Activated CD4-positive, alpha-beta memory T cell treated with anti-CD3 and anti-CD28 coated beads for 36 hours (primary cell): ENCODE measurements at regions of chr12 and their contacts with region 1.

Region 1: DNA sequence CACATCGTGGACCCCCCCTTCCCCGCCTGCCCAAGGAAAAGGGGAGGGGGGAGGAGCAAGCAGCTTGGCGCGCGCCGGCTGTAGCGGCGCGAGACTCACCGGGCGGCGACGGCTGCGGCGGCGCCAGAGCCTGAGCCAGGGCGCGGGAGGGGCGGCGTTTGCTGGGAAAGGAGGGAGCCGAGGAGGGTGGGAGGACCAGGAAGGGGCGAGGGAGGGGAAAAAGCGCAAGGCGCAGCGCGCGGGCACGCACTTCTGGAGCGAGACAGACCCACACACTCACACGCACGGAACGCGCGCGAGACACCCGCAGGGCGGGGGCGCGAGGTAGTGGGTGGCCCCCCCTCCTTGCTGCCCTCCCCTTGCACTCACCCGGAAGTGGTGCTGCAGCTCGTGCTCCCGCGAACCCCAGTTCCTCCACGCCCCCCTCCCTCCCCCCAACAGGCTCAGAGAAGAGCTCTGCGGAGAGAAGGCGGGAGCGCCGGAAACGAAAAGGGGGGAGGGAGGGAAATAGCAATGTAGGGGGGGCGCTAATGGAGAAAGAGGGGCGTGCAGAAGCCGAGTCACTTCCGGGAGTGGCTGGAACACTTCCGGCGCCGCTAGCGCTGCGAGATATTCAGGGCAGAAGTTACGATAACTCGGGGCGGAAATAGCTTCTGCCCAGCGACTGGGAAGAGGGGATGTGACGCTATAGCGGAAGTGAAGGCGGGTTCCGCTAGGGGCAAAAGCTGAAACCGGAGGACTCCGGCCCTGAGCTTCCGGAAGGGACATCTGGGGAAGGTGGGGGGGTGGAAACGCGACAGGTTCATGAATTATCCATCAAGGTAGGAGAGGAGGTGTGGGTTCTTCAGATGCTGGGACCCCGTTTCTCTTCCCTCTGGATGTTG is at the start of gene ZNF384:
- DNase-seq: peak; percentile 97
- H3K4me3 Mint-ChIP-seq: peak within 1 kb of the TSS; percentile 92
- H3K27ac Mint-ChIP-seq: peak within 1 kb of the TSS; percentile 97
- H3K4me1 Mint-ChIP-seq: peaks cover 44% of the 10 kb centered on the region
- H3K27me3 Mint-ChIP-seq: no peaks in the 10 kb centered on the region
- total RNA-seq, gene ZNF384: 55.3 to 56.3 TPM

Region 2: DNA sequence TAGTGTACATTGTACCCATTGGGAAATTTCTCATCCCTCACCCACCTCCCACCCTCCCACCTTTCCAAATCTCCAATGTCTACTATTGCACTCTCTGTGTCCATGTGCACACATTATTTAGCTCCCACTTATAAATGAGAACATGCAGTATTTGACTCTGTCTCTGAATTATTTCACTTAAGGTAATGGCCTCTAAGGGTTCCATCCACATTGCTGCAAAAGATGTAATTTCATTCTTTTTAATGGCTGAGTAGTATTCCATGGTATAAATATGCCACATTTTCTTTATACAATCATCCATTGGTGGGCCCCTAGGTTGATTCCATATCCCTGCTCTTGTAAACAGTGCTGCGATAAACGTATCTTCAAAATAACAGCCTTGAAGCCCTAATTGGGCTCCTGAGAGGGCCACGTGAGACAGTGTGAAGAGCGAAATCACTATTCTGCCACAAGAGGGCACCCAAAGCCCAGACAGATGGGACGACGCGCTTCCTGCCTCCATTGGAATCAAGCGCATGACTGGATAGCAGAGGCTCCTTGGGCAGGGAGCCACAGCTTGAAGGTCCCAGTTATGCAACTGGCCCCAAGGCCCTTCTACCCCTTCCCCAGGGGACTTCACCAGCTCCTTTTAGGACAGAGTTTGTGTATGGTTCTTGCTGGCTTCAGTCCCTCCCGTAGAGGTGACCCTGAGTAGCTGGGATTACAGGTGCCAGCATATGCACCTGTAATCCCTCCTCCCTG is 265.8 kb before region 1 on chr12:
- CTCF ChIA-PET with region 1: no interaction called
- POLR2A ChIA-PET with region 1: no interaction called
- intact Hi-C with region 1: loop called (anchors 10 kb)
- DNase-seq: peak; percentile 86
- H3K4me3 Mint-ChIP-seq: no peak overlapping the region
- H3K27ac Mint-ChIP-seq: peak overlapping the region; percentile 69
- H3K4me1 Mint-ChIP-seq: peaks cover 43% of the 10 kb centered on the region
- H3K27me3 Mint-ChIP-seq: peaks cover 3% of the 10 kb centered on the region

Region 3: GRCh38 chr12:6570264-6570887 is 118.9 kb before region 1 on chr12:
- CTCF ChIA-PET with region 1: interaction called, 3 read pairs
- POLR2A ChIA-PET with region 1: interaction called, 4 read pairs
- intact Hi-C with region 1: loop called (anchors 1 kb)
- DNase-seq: peak; percentile 67
- H3K4me3 Mint-ChIP-seq: no peak overlapping the region
- H3K27ac Mint-ChIP-seq: peak overlapping the region; percentile 63
- H3K4me1 Mint-ChIP-seq: peaks cover 63% of the 10 kb centered on the region
- H3K27me3 Mint-ChIP-seq: no peaks in the 10 kb centered on the region

Region 4: DNA sequence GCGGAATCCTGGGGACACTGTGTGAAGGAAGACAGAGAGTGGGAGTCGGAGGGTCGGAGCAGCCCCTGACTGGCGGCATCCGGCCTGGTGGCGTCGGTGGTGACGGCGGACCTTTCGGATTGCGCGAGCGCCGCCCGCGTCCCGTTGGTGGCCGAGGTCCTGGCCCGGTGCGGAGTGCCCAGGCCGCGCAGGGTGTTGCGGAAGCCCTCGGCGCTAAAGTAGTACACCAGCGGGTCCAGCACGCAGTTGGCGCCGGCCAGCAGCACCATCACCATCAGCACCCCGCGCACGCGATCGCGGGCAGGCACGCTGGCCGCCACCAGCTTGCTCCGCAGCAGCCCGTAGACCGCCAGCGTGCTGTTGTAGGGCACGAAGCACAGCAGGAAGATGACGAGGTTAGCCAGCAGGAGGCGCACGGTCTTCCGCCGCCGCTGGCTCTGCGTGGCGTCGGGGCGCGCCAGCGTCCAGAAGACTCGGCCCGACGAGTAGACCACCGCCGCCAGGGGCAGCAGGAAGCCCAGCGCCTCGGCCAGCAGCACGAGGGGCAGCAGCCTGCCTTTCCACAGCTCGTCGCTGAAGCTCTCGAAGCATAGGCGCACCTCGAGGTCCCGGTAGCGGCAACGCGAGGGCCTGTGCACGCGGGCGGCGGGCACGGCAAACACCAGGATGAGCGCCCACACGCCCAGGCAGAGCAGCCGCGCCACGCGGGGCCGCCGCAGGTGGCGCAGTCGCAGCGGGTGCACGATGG is 68.9 kb before region 1 on chr12:
- CTCF ChIA-PET with region 1: interaction called, 20 read pairs
- POLR2A ChIA-PET with region 1: interaction called, 4 read pairs
- intact Hi-C with region 1: loop called (anchors 1 kb)
- DNase-seq: peak; percentile 68
- H3K4me3 Mint-ChIP-seq: peak overlapping the region; percentile 43
- H3K27ac Mint-ChIP-seq: no peak overlapping the region
- H3K4me1 Mint-ChIP-seq: peaks cover 8% of the 10 kb centered on the region
- H3K27me3 Mint-ChIP-seq: no peaks in the 10 kb centered on the region

Region 5: GRCh38 chr12:6723607-6724396 is 34.6 kb after region 1 on chr12 and contains the start of gene COPS7A:
- CTCF ChIA-PET with region 1: interaction called, 15 read pairs
- POLR2A ChIA-PET with region 1: interaction called, 53 read pairs
- intact Hi-C with region 1: loop called (anchors 1 kb)
- DNase-seq: peak; percentile 99
- H3K4me3 Mint-ChIP-seq: peak within 1 kb of the TSS; percentile 83
- H3K27ac Mint-ChIP-seq: peak within 1 kb of the TSS; percentile 84
- H3K4me1 Mint-ChIP-seq: peaks cover 25% of the 10 kb centered on the region
- H3K27me3 Mint-ChIP-seq: no peaks in the 10 kb centered on the region
- total RNA-seq, gene COPS7A: 37.6 to 39.4 TPM

Region 6: GRCh38 chr12:6759741-6760140 is 70.5 kb after region 1 on chr12:
- CTCF ChIA-PET with region 1: no interaction called
- POLR2A ChIA-PET with region 1: no interaction called
- intact Hi-C with region 1: no loop called
- DNase-seq: no peak
- H3K4me3 Mint-ChIP-seq: no peak overlapping the region
- H3K27ac Mint-ChIP-seq: no peak overlapping the region
- H3K4me1 Mint-ChIP-seq: peaks cover 13% of the 10 kb centered on the region
- H3K27me3 Mint-ChIP-seq: peaks cover 8% of the 10 kb centered on the region

Region 7: DNA sequence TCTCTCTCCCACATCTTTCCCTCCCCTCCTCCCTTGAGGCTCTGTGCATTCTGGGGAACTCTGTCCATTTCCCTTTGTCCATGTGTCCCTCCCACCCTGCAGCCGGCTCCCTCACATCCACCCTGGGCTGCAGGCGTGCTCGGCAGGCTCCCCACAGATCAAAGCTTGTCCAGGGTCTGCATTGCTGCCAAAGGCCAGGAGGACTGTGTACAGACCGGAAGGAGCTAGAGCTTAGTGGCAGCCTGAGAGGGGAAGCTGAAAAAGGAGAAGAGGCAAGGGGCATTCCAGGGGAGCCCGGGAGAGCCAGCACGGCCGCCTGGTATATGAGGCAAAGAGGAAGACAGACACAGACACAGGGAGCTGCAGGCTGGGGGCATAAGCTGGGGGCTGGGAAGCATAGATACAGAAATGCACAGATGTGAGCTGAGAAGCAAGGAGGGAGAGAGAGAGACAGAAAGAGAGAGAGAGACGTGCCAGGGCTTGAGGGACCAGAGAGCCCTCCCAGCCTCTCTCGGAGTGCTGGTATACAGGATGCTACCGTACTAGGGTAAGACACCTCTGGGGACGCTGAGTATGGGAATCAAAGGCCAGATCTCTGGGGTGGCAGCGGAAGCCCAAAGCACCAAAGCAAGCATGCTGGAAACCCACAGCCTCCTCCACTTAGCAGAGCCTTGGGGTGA is 103.4 kb after region 1 on chr12:
- CTCF ChIA-PET with region 1: interaction called, 7 read pairs
- POLR2A ChIA-PET with region 1: interaction called, 12 read pairs
- intact Hi-C with region 1: no loop called
- DNase-seq: peak; percentile 55
- H3K4me3 Mint-ChIP-seq: peak overlapping the region; percentile 91
- H3K27ac Mint-ChIP-seq: peak overlapping the region; percentile 95
- H3K4me1 Mint-ChIP-seq: peaks cover 54% of the 10 kb centered on the region
- H3K27me3 Mint-ChIP-seq: no peaks in the 10 kb centered on the region

Region 8: DNA sequence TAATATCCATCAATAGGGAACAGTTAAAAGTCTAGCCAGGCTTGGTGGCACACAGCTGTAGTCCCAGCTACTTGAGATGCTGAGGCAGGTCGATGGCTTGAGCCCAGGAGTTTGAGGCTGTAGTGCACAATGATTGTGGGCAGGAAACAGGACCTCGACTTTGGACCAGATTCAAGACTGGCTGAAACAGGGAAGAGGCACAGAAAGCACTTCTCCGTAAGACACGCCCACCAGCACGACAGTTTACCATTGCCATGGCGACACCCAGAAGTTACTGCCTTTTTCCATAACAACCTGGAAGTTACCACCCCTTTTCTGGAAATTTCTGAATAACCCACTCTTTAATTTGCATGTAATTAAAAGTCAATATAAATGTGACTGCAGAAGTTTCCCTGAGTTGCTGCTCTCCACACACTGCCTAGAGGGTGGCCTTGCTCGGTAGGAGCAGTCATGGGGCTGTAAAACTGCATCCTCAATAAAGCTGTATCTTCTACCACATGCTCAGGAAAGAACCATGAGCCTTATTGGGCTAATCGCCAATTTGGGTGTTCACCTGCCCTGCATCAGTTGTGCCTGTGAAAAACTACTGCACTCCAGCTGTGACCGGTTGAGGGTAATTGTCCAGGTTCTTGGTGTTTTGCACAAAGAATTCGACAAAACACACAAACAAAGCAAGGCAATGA is 210.7 kb after region 1 on chr12:
- CTCF ChIA-PET with region 1: no interaction called
- POLR2A ChIA-PET with region 1: no interaction called
- intact Hi-C with region 1: no loop called
- DNase-seq: peak; percentile 47
- H3K4me3 Mint-ChIP-seq: no peak overlapping the region
- H3K27ac Mint-ChIP-seq: no peak overlapping the region
- H3K4me1 Mint-ChIP-seq: peaks cover 7% of the 10 kb centered on the region
- H3K27me3 Mint-ChIP-seq: no peaks in the 10 kb centered on the region